Sigmoid colon (tissue), 7 donors: ENCODE measurements at regions of chr10 and their contacts with region 1.

Region 1: GRCh38 chr10:51224671-51225161 is 150.4 kb downstream of the PRKG1 start:
- DNase-seq: no peak
- H3K4me3 ChIP-seq: peak overlapping the region in 3 of 4 donors; percentile 19 to 27 (median 26)
- H3K27ac ChIP-seq: peak overlapping the region in 3 of 4 donors; percentile 67 to 70 (median 68)
- H3K4me1 ChIP-seq: peaks cover 0 to 46% (median 33%) of the 10 kb centered on the region in 4 donors
- H3K27me3 ChIP-seq: no peaks in the 10 kb centered on the region
- CTCF ChIP-seq: no peak
- EP300 ChIP-seq: no peak
- POLR2A ChIP-seq: no peak

Region 2: DNA sequence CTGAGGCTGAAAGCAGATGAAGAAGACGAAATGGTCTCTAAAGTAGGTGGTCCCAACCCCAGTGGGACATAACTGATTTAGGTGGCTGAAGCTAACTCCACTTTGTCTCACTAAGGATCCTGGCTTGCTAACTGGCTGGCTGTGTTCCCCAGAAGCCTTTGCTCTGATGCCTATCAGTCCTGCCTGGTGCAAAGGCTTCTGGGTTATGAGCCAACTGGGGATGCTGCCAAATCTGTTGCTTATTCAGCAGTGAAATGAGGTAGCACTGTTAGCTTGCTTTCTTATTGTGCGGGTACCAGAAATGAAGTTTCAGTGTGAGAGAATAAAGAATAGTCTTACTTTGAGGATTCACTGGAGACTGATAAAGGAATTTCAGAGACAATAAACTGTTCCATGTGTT is 132.3 kb before region 1 on chr10:
- intact Hi-C with region 1: loop called (anchors 5 kb)
- DNase-seq: peak; percentile 94
- H3K4me3 ChIP-seq: peak overlapping the region in 1 of 4 donors; percentile 4
- H3K27ac ChIP-seq: peak overlapping the region; percentile 43 to 71 (median 66)
- H3K4me1 ChIP-seq: peaks cover 0 to 58% (median 41%) of the 10 kb centered on the region in 4 donors
- H3K27me3 ChIP-seq: no peaks in the 10 kb centered on the region
- CTCF ChIP-seq: no peak
- EP300 ChIP-seq: no peak
- POLR2A ChIP-seq: no peak

Region 3: DNA sequence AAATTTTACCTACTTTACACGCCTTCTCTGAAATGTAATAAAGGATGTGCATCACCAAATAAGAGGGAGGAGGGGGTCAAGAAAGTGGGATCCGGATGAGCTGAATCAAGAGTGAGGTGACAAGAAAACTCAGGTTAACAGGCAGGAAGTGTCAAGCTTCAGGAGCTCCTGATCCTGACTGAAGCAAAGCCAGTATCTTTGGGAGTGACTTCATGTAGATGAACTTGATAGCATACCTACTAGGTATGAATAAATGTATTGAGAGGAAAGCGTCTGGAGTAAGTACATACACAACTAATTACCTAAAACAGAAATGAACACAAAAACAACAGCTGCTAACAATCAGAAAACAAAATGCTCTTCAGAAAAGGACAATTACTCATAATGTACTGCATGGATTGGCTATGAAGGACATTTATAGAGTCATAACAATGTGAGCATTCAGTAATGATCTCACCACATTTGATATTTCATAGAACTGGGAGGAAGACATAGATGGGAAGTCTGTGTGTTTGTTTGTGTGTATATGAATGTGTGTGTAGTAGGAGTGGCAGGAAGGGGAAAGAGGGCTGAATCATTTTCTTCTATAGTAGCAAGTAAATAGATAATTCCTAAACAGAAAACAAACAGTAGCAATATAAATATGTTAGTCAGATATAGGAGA is 121.0 kb before region 1 on chr10:
- intact Hi-C with region 1: no loop called
- DNase-seq: no peak
- H3K4me3 ChIP-seq: no peak overlapping the region
- H3K27ac ChIP-seq: no peak overlapping the region
- H3K4me1 ChIP-seq: peaks cover 0 to 29% (median 15%) of the 10 kb centered on the region in 4 donors
- H3K27me3 ChIP-seq: no peaks in the 10 kb centered on the region
- CTCF ChIP-seq: no peak
- EP300 ChIP-seq: no peak
- POLR2A ChIP-seq: no peak

Region 4: GRCh38 chr10:51699475-51700227 is 474.9 kb after region 1 on chr10 and contains the start of gene CSTF2T:
- intact Hi-C with region 1: loop called (anchors 10 kb)
- DNase-seq: peak; percentile 95
- H3K4me3 ChIP-seq: peak within 1 kb of the TSS; percentile 66 to 80 (median 76)
- H3K27ac ChIP-seq: peak within 1 kb of the TSS; percentile 88 to 94 (median 91)
- H3K4me1 ChIP-seq: peaks cover 0 to 52% (median 41%) of the 10 kb centered on the region in 4 donors
- H3K27me3 ChIP-seq: no peaks in the 10 kb centered on the region
- CTCF ChIP-seq: no peak
- EP300 ChIP-seq: no peak
- POLR2A ChIP-seq: peak; percentile 68 to 79
- total RNA-seq, gene CSTF2T: 10.8 to 21.2 (median 18.5) TPM